B cell (primary cell): ENCODE measurements at regions of chr6 and their contacts with region 1.

Region 1: DNA sequence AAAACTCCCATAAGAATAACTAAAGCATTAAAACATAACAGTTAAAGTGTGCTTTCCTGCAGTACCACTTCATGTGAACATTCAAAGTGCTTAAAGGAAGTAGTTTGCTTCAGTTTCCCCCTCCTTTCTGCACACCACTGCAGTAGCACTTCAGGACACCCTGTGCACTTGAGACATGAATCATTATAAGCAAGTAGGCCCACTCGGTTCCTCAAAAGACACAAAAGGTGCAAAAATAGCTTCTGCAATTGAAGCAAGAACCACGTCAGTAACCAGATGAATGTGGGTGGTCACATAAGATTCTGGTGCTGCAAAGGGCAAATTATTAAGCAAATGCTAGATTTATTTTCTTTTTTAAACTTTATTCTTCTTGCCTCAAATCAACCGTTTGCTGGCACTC is 160.6 kb downstream of the HIVEP2 start:
- DNase-seq: peak; percentile 71
- ATAC-seq: peak; percentile 97
- H3K4me3 ChIP-seq: no peak overlapping the region
- H3K4me3 Mint-ChIP-seq: peak overlapping the region; percentile 55
- H3K27ac ChIP-seq: peak overlapping the region in 1 of 2 donors; percentile 61
- H3K27ac Mint-ChIP-seq: peak overlapping the region; percentile 70
- H3K4me1 ChIP-seq: peaks cover 10 to 12% of the 10 kb centered on the region in 2 donors
- H3K4me1 Mint-ChIP-seq: peaks cover 22% of the 10 kb centered on the region
- H3K27me3 ChIP-seq: no peaks in the 10 kb centered on the region
- H3K27me3 Mint-ChIP-seq: no peaks in the 10 kb centered on the region
- CTCF ChIP-seq: no peak

Region 2: GRCh38 chr6:142796571-142796970 is 12.2 kb after region 1 on chr6:
- CTCF ChIA-PET with region 1: interaction called, 3 read pairs
- POLR2A ChIA-PET with region 1: interaction called, 20 read pairs
- intact Hi-C with region 1: no loop called
- DNase-seq: no peak
- ATAC-seq: no peak
- H3K4me3 ChIP-seq: no peak overlapping the region
- H3K4me3 Mint-ChIP-seq: no peak overlapping the region
- H3K27ac ChIP-seq: no peak overlapping the region
- H3K27ac Mint-ChIP-seq: no peak overlapping the region
- H3K4me1 ChIP-seq: peaks cover 11 to 16% of the 10 kb centered on the region in 2 donors
- H3K4me1 Mint-ChIP-seq: peaks cover 42% of the 10 kb centered on the region
- H3K27me3 ChIP-seq: no peaks in the 10 kb centered on the region
- H3K27me3 Mint-ChIP-seq: no peaks in the 10 kb centered on the region
- CTCF ChIP-seq: no peak

Region 3: DNA sequence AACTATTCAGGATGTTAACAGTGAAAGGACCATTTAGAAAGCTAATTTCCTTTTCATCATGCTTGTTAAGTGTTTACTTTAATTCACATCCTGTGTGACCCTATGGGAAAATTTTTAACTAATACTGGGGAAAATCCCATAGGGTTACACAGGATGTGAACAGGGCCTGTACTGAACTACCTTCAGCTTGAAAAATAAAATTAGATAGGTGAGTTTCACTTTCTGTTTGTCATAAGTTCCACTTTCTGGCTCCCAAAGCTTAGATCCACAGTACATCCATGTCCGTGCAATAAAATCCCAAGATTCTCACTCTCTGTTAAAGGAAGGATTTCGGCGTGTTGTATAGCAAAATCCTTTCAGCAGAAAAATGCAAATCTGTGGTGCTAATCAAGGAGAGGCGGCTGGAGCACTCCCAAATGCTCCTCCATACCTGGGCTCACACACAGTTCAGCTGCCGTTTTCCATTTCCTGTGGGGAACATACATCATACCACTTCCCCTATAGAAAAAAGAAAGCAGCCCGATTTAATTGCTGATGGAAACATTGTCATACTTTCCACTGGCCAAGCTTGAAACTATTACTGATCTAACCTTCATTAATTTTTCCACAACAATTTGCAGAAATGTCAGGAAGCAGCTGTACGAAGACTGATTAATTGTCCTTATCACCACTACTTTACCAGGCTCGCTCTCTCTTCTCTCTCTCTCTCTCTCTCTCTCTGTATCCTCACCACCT is 35.4 kb after region 1 on chr6:
- CTCF ChIA-PET with region 1: no interaction called
- POLR2A ChIA-PET with region 1: interaction called, 3 read pairs
- intact Hi-C with region 1: loop called (anchors 5 kb)
- DNase-seq: peak; percentile 77
- ATAC-seq: peak; percentile 68
- H3K4me3 ChIP-seq: peak overlapping the region; percentile 18 to 89 (median 52)
- H3K4me3 Mint-ChIP-seq: peak overlapping the region; percentile 92
- H3K27ac ChIP-seq: peak overlapping the region; percentile 86 to 87
- H3K27ac Mint-ChIP-seq: peak overlapping the region; percentile 96
- H3K4me1 ChIP-seq: peaks cover 42 to 47% of the 10 kb centered on the region in 2 donors
- H3K4me1 Mint-ChIP-seq: peaks cover 70% of the 10 kb centered on the region
- H3K27me3 ChIP-seq: no peaks in the 10 kb centered on the region
- H3K27me3 Mint-ChIP-seq: no peaks in the 10 kb centered on the region
- CTCF ChIP-seq: no peak

Region 4: DNA sequence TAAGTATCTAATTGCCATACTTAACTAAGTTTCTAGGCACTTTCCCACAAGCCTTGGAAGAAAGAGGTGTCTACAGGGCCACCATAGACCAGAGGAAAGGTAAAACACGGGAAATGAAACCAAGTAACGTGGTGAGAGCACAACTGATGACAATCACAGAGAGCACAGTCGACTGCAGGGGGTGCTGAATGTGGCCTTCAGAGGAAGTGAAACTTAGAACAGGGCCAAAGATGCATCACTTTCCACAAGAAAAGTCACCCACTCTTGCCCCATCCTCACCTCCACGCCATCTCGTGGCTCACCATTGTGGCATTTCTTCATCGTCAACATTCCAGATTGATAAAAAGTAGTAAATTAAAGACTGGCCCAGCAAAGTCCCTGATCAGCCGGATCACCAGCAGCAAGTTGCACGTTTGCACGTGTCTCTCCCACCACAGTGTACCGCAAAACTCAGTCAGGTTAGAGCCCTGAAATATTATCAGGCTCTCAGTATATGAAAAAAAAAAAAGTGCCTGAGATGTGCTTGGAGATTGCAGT is 129.2 kb after region 1 on chr6:
- CTCF ChIA-PET with region 1: no interaction called
- POLR2A ChIA-PET with region 1: no interaction called
- intact Hi-C with region 1: loop called (anchors 10 kb)
- DNase-seq: peak; percentile 92
- ATAC-seq: peak; percentile 95
- H3K4me3 ChIP-seq: peak overlapping the region in 4 of 5 experiments; percentile 9 to 60 (median 24)
- H3K4me3 Mint-ChIP-seq: peak overlapping the region; percentile 91
- H3K27ac ChIP-seq: peak overlapping the region; percentile 93
- H3K27ac Mint-ChIP-seq: peak overlapping the region; percentile 99
- H3K4me1 ChIP-seq: peaks cover 21 to 22% of the 10 kb centered on the region in 2 donors
- H3K4me1 Mint-ChIP-seq: peaks cover 40% of the 10 kb centered on the region
- H3K27me3 ChIP-seq: no peaks in the 10 kb centered on the region
- H3K27me3 Mint-ChIP-seq: no peaks in the 10 kb centered on the region
- CTCF ChIP-seq: peak; percentile 63